ENCODE measurements at regions of chr1 and their contacts with region 1.

Region 1: DNA sequence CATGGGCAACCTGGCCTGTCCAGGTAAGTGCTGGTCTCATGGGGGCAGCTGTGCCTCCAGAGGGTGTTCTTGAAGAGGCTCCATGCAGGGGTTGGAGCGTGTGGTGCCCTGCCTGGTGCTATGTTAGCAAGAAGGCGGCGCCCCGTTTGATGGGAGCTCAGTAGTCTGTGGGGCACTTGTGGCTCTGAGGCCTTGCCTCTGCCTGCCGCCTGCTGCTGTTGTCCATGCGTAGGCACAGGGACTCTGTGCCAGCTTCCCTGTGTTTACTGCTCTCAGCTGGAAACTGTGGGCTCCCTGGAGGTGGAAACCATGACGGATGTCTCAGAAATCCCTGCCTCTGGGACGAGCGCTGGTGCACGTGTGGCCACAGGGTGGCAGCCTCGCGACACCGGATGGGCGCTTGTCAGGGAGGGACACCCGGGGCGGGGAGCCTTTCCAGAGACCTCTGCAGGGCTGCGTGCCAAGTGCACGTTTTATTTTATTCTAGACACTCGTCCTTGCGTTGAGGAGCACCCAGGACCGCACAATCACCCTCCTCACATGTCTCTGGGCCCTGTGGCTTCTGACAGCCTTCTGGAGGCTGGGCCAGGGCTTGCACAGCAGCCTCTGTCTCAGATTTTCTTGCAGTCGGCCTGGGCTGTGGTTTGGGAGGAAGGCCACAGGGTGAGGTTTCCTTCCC is 27.1 kb downstream of the SNAP47 start:
- DNase-seq: peak; percentile 72 to 88 (median 85)
- ATAC-seq: peak; percentile 86
- H3K4me3 ChIP-seq: peak overlapping the region; percentile 39
- H3K4me3 Mint-ChIP-seq: peak overlapping the region; percentile 39 to 80 (median 72)
- H3K27ac ChIP-seq: peak overlapping the region; percentile 57
- H3K27ac Mint-ChIP-seq: peak overlapping the region; percentile 69 to 95 (median 86)
- H3K4me1 ChIP-seq: peaks cover 56 to 61% of the 10 kb centered on the region in 2 donors
- H3K4me1 Mint-ChIP-seq: peaks cover 36 to 89% (median 67%) of the 10 kb centered on the region in 7 donors
- H3K27me3 ChIP-seq: no peaks in the 10 kb centered on the region
- H3K27me3 Mint-ChIP-seq: no peaks in the 10 kb centered on the region

Region 2: GRCh38 chr1:227563324-227564201 is 198.8 kb before region 1 on chr1 and contains the start of gene ZNF678:
- CTCF ChIA-PET with region 1: no interaction called
- POLR2A ChIA-PET with region 1: no interaction called
- intact Hi-C with region 1: loop called in 1 of 2 experiments (anchors 10 kb)
- DNase-seq: peak; percentile 58 to 86 (median 84)
- ATAC-seq: peak; percentile 95
- H3K4me3 ChIP-seq: peak within 1 kb of the TSS; percentile 88
- H3K4me3 Mint-ChIP-seq: peak within 1 kb of the TSS; percentile 87 to 97 (median 94)
- H3K27ac ChIP-seq: peak within 1 kb of the TSS; percentile 82
- H3K27ac Mint-ChIP-seq: peak within 1 kb of the TSS; percentile 71 to 95 (median 91)
- H3K4me1 ChIP-seq: peaks cover 4 to 5% of the 10 kb centered on the region in 2 donors
- H3K4me1 Mint-ChIP-seq: peaks cover 17 to 57% (median 40%) of the 10 kb centered on the region in 7 donors
- H3K27me3 ChIP-seq: no peaks in the 10 kb centered on the region
- H3K27me3 Mint-ChIP-seq: peaks cover 22 to 27% (median 27%) of the 10 kb centered on the region in 5 donors
- total RNA-seq, gene ZNF678: 3.2 to 8.3 (median 7.4) TPM

Region 3: GRCh38 chr1:227697321-227697864 is 65.0 kb before region 1 on chr1:
- CTCF ChIA-PET with region 1: no interaction called
- POLR2A ChIA-PET with region 1: no interaction called
- intact Hi-C with region 1: no loop called
- DNase-seq: no peak
- ATAC-seq: no peak
- H3K4me3 ChIP-seq: no peak overlapping the region
- H3K4me3 Mint-ChIP-seq: no peak overlapping the region
- H3K27ac ChIP-seq: no peak overlapping the region
- H3K27ac Mint-ChIP-seq: no peak overlapping the region
- H3K4me1 ChIP-seq: no peaks in the 10 kb centered on the region
- H3K4me1 Mint-ChIP-seq: no peaks in the 10 kb centered on the region
- H3K27me3 ChIP-seq: no peaks in the 10 kb centered on the region
- H3K27me3 Mint-ChIP-seq: peaks cover 0 to 52% (median 19%) of the 10 kb centered on the region in 5 donors

Region 4: GRCh38 chr1:227734856-227735538 is 27.4 kb before region 1 on chr1 and contains the starts of genes JMJD4 and SNAP47:
- CTCF ChIA-PET with region 1: no interaction called
- POLR2A ChIA-PET with region 1: interaction called, 6 read pairs
- intact Hi-C with region 1: loop called (anchors 1 to 2 kb)
- DNase-seq: peak; percentile 85 to 98 (median 93)
- ATAC-seq: peak; percentile 94
- H3K4me3 ChIP-seq: peak within 1 kb of the TSS; percentile 72
- H3K4me3 Mint-ChIP-seq: peak within 1 kb of the TSS; percentile 87 to 97 (median 90)
- H3K27ac ChIP-seq: peak within 1 kb of the TSS; percentile 87
- H3K27ac Mint-ChIP-seq: peak within 1 kb of the TSS; percentile 62 to 96 (median 89)
- H3K4me1 ChIP-seq: peaks cover 3 to 16% of the 10 kb centered on the region in 2 donors
- H3K4me1 Mint-ChIP-seq: peaks cover 28 to 59% (median 40%) of the 10 kb centered on the region in 7 donors
- H3K27me3 ChIP-seq: no peaks in the 10 kb centered on the region
- H3K27me3 Mint-ChIP-seq: no peaks in the 10 kb centered on the region
- total RNA-seq, gene JMJD4: 12.1 to 36.8 (median 26.3) TPM
- total RNA-seq, gene SNAP47: 18.5 to 31.8 (median 27.8) TPM

Region 5: GRCh38 chr1:227849251-227849650 is 86.9 kb after region 1 on chr1:
- CTCF ChIA-PET with region 1: interaction called, 4 read pairs
- POLR2A ChIA-PET with region 1: no interaction called
- intact Hi-C with region 1: loop called in 1 of 2 experiments (anchors 1 kb)
- DNase-seq: peak in 4 of 9 donors; percentile 6 to 32 (median 19)
- ATAC-seq: peak; percentile 27
- H3K4me3 ChIP-seq: no peak overlapping the region
- H3K4me3 Mint-ChIP-seq: no peak overlapping the region
- H3K27ac ChIP-seq: no peak overlapping the region
- H3K27ac Mint-ChIP-seq: peak overlapping the region in 2 of 9 donors; percentile 38 to 66
- H3K4me1 ChIP-seq: no peaks in the 10 kb centered on the region
- H3K4me1 Mint-ChIP-seq: peaks cover 0 to 13% (median 7%) of the 10 kb centered on the region in 7 donors
- H3K27me3 ChIP-seq: no peaks in the 10 kb centered on the region
- H3K27me3 Mint-ChIP-seq: peaks cover 0 to 7% (median 0%) of the 10 kb centered on the region in 5 donors

Region 6: DNA sequence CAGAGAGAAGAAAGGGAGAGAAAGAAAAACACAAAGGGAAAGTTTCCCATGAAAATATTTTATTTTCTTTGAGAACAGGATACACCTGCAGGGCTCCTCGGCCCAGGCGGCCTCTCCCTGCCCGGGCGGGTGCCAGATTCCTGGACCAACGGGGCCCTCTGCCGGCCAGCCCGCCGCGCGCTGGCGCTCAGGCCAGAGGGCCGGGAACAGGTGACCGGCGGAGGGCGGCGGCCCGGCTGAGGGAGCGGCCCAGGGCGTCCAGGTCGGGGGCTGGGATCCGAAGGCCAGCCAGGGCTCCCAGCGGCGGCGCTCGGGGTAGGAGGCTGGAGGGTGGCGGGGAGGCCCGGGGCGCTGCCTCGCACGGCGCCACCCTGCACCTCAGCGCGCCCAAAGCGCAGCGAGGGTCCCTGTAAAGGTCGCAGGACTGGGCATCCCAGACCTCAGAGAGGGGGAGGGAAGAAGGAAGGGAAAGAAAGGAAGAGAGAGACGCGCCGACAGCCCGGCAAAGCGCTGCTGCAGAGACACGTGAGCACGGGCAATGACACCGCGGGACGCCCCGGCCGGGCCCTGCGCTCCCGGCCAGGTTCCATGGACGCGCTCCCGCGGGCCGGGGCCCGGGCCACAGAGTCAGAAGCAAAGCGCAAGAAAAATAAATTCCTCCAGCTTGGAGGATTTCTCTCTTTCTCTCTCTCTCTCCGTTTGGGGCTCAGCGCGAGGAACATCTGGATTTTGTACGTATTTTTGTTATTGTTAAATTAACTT is 184.4 kb after region 1 on chr1:
- CTCF ChIA-PET with region 1: interaction called, 38 read pairs
- POLR2A ChIA-PET with region 1: interaction called, 3 read pairs
- intact Hi-C with region 1: loop called (anchors 1 kb)
- DNase-seq: peak in 8 of 9 donors; percentile 24 to 70 (median 60)
- ATAC-seq: peak; percentile 63
- H3K4me3 ChIP-seq: peak overlapping the region; percentile 17
- H3K4me3 Mint-ChIP-seq: peak overlapping the region; percentile 65 to 87 (median 74)
- H3K27ac ChIP-seq: no peak overlapping the region
- H3K27ac Mint-ChIP-seq: peak overlapping the region in 1 of 9 donors; percentile 23
- H3K4me1 ChIP-seq: peaks cover 0 to 7% of the 10 kb centered on the region in 2 donors
- H3K4me1 Mint-ChIP-seq: peaks cover 5 to 12% (median 8%) of the 10 kb centered on the region in 7 donors
- H3K27me3 ChIP-seq: no peaks in the 10 kb centered on the region
- H3K27me3 Mint-ChIP-seq: peaks cover 8 to 34% (median 13%) of the 10 kb centered on the region in 5 donors

Region 7: DNA sequence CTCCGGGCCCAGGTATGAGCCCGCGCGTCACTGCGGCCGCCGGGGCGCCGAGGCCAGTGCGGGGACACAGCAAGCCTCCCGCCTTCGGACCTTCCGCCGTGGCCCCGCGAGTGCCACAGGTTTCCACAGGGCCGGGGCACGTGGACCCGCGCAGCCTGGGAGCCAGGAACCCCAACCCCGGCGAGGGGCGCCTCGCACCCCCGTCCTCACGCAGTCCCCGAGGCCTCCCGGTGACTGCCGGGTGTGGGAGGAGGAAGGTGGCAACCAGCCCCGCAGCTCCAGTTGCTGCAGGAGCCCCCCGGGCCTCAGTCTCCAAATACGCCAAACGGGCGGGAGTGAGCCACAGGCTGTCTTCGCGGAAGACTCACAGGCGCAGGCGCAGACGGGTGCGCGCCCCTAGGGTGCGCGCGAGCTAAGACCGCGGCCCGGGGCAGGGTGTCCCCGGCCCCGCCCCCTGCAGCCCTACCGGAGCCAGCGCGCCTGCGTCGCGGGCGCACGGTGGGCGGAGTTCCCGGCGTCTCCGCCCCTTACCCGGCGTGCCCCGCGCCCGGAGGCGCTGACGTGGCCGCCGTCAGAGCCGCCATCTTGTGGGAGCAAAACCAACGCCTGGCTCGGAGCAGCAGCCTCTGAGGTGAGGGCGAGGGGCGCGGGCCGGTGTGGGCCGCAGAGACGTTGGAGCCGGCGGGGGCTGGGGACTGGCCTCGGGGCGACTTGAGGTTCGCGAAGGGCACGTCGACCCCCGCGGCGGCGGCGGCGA is 319.9 kb after region 1 on chr1 and contains the start of gene ARF1:
- CTCF ChIA-PET with region 1: no interaction called
- POLR2A ChIA-PET with region 1: interaction called, 3 read pairs
- intact Hi-C with region 1: loop called in 1 of 2 experiments (anchors 1 kb)
- DNase-seq: peak; percentile 89 to 99 (median 96)
- ATAC-seq: peak; percentile 97
- H3K4me3 ChIP-seq: peak within 1 kb of the TSS; percentile 88
- H3K4me3 Mint-ChIP-seq: peak within 1 kb of the TSS; percentile 89 to 97 (median 95)
- H3K27ac ChIP-seq: peak within 1 kb of the TSS; percentile 97
- H3K27ac Mint-ChIP-seq: peak within 1 kb of the TSS; percentile 76 to 97 (median 95)
- H3K4me1 ChIP-seq: peaks cover 41 to 43% of the 10 kb centered on the region in 2 donors
- H3K4me1 Mint-ChIP-seq: peaks cover 36 to 66% (median 52%) of the 10 kb centered on the region in 7 donors
- H3K27me3 ChIP-seq: no peaks in the 10 kb centered on the region
- H3K27me3 Mint-ChIP-seq: no peaks in the 10 kb centered on the region
- total RNA-seq, gene ARF1: 198 to 390 (median 259) TPM

Measured in naive thymus-derived CD4-positive, alpha-beta T cell (primary cell).